HAP-1 (cell line): ENCODE measurements at regions of chr1 and their contacts with region 1.

Region 1: GRCh38 chr1:5514519-5515183 is 477.6 kb downstream of the NPHP4 start:
- DNase-seq: peak; percentile 32 to 80
- H3K4me3 ChIP-seq: no peak overlapping the region
- H3K4me1 ChIP-seq: no peaks in the 10 kb centered on the region
- H3K27me3 ChIP-seq: peaks cover 3% of the 10 kb centered on the region; the same call in 1 of the 2 replicates

Region 2: GRCh38 chr1:5099558-5100252 is 414.9 kb before region 1 on chr1:
- in situ Hi-C with region 1: no loop called
- DNase-seq: no peak
- H3K4me3 ChIP-seq: no peak overlapping the region
- H3K4me1 ChIP-seq: no peaks in the 10 kb centered on the region
- H3K27me3 ChIP-seq: no peaks in the 10 kb centered on the region

Region 3: DNA sequence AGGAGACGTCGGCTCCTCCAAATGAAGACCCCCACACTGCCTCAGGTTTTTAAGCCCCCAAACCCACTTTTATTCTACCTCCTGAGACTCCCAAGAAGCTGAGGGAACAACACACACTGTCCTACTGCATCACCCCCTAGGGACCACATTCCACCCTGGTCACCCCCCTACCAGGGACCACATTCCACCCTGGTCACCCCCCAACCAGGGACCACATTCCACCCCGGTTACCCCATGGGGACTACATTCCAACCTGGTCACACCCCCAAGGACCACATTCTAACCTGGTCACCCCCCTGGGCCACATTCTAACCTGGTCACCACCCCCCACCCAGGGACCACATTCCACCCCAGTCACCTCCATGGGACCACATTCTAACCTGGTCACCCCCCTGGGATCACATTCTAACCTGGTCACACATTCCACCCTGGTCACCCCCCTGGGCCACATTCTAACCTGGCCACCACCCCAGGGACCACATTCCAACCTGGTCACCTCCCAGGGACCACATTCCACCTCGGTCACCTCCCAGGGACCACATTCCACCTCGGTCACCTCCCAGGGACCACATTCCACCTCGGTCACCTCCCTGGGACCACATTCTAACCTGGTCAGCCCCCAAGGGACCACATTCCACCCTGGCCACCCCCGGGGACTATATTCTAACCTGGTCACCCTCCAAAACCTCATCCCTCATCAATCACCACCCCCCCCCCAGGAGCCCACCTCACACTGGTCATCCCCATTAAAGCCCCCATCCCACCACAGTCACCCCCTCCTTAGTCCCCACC is 110.0 kb before region 1 on chr1:
- in situ Hi-C with region 1: no loop called
- DNase-seq: no peak
- H3K4me3 ChIP-seq: no peak overlapping the region
- H3K4me1 ChIP-seq: no peaks in the 10 kb centered on the region
- H3K27me3 ChIP-seq: no peaks in the 10 kb centered on the region

Region 4: DNA sequence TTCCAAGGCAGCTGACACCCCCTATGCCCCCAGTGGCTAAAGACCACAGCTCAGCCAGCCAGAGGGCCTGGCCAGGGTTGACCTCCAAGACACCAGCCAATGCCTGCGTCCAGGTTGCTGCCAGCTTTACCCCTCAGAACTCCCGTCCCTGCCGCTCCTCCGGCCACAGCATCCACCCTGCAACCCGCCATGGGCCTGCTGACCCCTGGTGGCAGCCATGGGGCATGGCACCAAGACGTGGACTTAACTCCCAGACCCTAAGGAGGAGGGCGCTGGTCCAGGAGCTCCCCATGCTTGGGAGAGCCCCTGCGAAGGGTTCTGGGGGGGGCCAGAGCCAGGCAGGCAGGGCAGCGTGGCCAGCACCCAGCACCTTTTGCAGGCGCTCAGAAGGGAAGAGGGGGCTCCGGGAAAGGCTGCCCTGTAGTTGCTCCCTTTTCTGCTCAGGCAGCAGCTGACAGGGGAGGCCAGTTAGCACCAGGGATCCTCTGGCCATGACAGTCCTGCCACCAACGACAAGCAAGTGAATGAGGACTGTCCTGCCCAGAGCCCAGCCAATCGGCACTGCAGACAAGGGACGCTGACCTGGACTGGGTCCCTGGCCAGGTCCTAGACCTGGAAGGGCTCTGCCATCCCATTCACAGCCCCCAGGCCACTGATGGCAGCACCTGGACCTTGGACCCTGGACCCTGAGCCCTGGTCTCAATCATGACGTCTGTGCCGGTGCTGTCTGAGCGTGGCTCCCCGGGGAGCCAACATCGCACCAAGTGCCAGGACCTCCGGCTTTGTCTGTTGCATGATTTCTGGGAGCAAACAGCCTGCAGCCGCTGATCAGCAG is 231.3 kb after region 1 on chr1:
- in situ Hi-C with region 1: loop called (anchors 5 kb)
- DNase-seq: peak; percentile 39 to 79
- H3K4me3 ChIP-seq: no peak overlapping the region
- H3K4me1 ChIP-seq: no peaks in the 10 kb centered on the region
- H3K27me3 ChIP-seq: 0 out of 2 replicates have a peak, but pooled peaks cover 4% of the 10 kb centered on the region

Region 5: DNA sequence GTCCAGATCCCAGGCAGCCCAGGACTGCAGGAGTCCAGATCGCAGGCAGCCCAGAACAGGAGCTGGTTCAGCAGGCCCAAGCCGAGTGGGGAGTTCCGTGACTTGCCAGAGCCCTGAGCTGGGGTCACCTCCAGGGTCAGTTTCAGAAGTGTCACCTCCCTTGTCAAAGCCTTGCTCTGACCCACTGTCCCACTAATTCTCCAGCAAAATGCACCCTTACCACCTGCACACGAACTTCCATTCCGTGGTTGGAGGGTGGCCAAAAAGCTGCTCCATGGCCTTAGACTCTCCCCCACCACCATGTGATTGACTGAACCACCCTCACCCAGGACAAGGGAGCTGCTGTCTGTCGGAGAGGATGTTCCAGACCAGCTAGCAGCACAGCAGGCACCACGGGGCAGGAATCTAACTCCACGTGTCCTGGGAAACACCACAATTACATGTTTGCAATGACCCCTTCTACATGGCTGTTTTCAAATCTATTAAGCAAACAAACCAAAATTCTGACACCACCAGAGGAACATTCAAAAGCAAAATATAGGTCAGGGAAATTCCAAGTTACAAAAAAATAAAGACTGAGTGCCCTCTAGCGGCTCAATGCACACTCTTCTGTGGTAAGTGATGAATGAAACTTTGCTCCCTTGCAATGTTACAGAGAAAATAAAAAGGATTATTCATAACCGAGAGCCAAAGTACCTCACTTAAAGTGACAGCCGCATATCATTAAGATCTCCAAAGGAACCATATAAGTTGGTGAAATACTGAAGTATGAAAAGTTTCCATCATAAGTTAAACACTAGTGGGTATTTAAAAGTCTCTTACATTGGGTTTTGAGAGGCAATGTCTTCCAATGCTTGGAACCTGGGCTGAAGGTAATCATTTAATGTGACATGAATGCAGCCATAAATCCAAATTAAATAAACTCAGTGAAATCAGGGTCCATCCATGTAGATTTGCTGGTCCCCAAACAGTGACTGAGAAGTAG is 401.2 kb after region 1 on chr1:
- in situ Hi-C with region 1: loop called (anchors 25 kb)
- DNase-seq: peak; percentile 36 to 56
- H3K4me3 ChIP-seq: no peak overlapping the region
- H3K4me1 ChIP-seq: no peaks in the 10 kb centered on the region; the same call in 1 of the 2 replicates
- H3K27me3 ChIP-seq: no peaks in the 10 kb centered on the region